ENCODE measurements at regions of chr15 and their contacts with region 1.

Region 1: DNA sequence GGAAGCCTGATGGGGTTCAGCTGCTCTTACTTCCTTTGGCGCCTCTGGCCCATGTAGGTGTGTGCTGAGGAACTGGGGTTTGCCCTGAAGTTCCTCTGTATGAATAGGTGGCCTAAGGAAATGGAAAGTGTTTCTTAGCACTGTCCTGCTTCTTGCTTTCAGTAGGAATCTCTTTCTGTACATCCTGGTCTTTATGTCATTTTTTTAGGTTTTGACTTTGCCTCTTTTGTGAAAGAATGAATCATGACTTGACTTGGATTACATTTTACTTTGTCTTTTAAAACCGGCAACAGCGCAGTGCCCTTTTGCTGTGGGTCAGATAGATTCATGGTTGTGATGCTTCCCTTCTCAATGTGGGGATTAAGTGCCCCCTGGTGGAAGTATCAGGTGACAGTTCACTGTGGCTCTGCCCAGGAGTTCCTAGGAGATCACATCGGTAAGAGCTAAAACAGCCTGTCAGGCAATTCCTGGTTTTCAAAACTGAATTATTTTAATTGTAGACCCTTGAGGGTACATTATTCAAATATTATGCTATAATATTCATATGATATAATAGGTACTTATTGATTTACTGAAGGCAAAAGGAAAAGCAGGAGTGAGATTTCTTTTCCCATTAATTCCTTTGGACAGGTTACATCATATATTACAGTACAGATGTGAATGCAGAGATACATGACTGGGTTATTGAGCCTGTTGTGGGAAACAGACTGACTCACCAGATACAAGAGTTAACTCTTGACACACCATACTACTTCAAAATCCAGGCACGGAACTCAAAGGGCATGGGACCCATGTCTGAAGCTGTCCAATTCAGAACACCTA is 95.4 kb downstream of the HCN4 start:
- DNase-seq: peak; percentile 27 to 44 (median 42)
- H3K4me3 ChIP-seq: no peak overlapping the region
- H3K4me3 Mint-ChIP-seq: peak overlapping the region in 1 of 2 donors; percentile 70
- H3K27ac ChIP-seq: no peak overlapping the region
- H3K27ac Mint-ChIP-seq: no peak overlapping the region
- H3K4me1 ChIP-seq: no peaks in the 10 kb centered on the region
- H3K4me1 Mint-ChIP-seq: peaks cover 2% of the 10 kb centered on the region
- H3K27me3 ChIP-seq: peaks cover 3 to 7% of the 10 kb centered on the region in 2 donors
- H3K27me3 Mint-ChIP-seq: peaks cover 14 to 18% (median 15%) of the 10 kb centered on the region in 3 donors
- CTCF ChIP-seq: peak; percentile 84

Region 2: DNA sequence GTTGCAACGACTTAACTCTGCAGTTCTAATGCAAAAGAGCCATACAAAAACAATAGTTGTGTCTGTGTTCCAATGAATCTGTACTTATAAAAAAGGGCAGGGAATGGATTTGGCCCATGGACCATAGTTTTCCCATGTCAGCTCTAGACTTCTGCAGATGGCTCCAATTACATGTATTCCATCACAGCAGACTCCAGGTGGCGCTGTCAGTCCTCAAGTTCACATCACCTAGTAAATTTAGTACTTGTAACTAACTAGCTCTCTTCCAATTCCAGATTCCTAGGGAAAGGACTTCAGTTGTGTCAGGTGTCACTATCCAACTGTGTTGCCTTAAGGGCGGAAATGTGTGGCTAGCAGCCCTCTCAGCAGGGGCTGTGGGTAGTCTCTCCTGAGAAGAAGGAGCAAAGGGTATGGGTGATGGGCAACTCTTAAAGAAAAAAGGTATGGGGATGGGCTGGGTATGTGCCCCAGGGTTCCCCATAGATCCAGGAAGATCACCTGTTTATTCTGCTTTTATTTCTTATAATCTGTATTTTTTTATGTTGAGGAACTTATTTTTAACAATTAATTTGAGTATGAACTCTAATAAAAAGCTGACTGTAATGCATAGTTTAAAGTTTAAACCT is 551.2 kb before region 1 on chr15:
- intact Hi-C with region 1: loop called in 1 of 2 experiments (anchors 5 kb)
- DNase-seq: peak; percentile 47 to 62 (median 56)
- H3K4me3 ChIP-seq: no peak overlapping the region
- H3K4me3 Mint-ChIP-seq: no peak overlapping the region
- H3K27ac ChIP-seq: no peak overlapping the region
- H3K27ac Mint-ChIP-seq: no peak overlapping the region
- H3K4me1 ChIP-seq: no peaks in the 10 kb centered on the region
- H3K4me1 Mint-ChIP-seq: no peaks in the 10 kb centered on the region
- H3K27me3 ChIP-seq: no peaks in the 10 kb centered on the region
- H3K27me3 Mint-ChIP-seq: peaks cover 0 to 4% (median 2%) of the 10 kb centered on the region in 3 donors
- CTCF ChIP-seq: peak; percentile 92

Region 3: GRCh38 chr15:73212424-73212823 is 61.0 kb before region 1 on chr15:
- intact Hi-C with region 1: no loop called
- DNase-seq: no peak
- H3K4me3 ChIP-seq: no peak overlapping the region
- H3K4me3 Mint-ChIP-seq: no peak overlapping the region
- H3K27ac ChIP-seq: no peak overlapping the region
- H3K27ac Mint-ChIP-seq: no peak overlapping the region
- H3K4me1 ChIP-seq: no peaks in the 10 kb centered on the region
- H3K4me1 Mint-ChIP-seq: no peaks in the 10 kb centered on the region
- H3K27me3 ChIP-seq: peaks cover 0 to 10% of the 10 kb centered on the region in 2 donors
- H3K27me3 Mint-ChIP-seq: peaks cover 2 to 23% (median 5%) of the 10 kb centered on the region in 3 donors
- CTCF ChIP-seq: no peak

Region 4: GRCh38 chr15:73240866-73241499 is 32.4 kb before region 1 on chr15:
- intact Hi-C with region 1: no loop called
- DNase-seq: peak; percentile 39 to 58 (median 56)
- H3K4me3 ChIP-seq: no peak overlapping the region
- H3K4me3 Mint-ChIP-seq: no peak overlapping the region
- H3K27ac ChIP-seq: no peak overlapping the region
- H3K27ac Mint-ChIP-seq: no peak overlapping the region
- H3K4me1 ChIP-seq: no peaks in the 10 kb centered on the region
- H3K4me1 Mint-ChIP-seq: no peaks in the 10 kb centered on the region
- H3K27me3 ChIP-seq: peaks cover 7% of the 10 kb centered on the region in 2 donors
- H3K27me3 Mint-ChIP-seq: peaks cover 7 to 15% (median 8%) of the 10 kb centered on the region in 3 donors
- CTCF ChIP-seq: peak; percentile 89

Region 5: DNA sequence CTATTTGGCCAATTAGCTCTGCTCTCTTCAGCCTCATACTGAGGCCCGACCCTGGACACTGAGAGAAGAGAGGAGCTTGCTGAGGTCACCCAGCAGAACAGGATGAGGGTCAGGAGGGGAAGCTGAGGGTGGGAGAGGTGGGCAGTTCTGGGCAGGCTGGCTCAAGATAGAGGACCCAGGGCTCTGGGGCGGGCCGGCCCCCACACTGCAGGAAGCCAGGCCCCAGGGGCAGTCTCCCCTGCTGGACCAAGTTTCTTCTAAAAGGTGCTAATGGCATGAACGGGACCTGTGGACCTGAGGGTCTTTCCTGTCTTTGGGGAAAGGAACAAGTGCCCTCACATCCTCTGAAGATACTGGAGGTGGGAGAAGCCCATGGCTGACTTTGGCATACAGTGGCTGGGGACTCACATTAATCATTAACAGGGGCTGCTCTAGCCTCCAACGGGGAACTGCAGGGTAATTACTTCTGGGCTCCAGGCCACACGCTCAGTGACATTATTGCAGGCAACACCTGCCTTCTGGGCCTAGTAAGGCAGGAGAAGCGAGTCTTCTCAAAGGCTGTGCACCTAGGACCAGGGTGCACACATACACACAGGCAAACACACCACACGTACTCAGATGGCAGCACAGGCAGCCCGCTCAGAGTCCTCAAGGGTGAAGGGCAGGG is 84.7 kb after region 1 on chr15:
- intact Hi-C with region 1: no loop called
- DNase-seq: no peak
- H3K4me3 ChIP-seq: no peak overlapping the region
- H3K4me3 Mint-ChIP-seq: no peak overlapping the region
- H3K27ac ChIP-seq: no peak overlapping the region
- H3K27ac Mint-ChIP-seq: no peak overlapping the region
- H3K4me1 ChIP-seq: no peaks in the 10 kb centered on the region
- H3K4me1 Mint-ChIP-seq: no peaks in the 10 kb centered on the region
- H3K27me3 ChIP-seq: peaks cover 0 to 18% of the 10 kb centered on the region in 2 donors
- H3K27me3 Mint-ChIP-seq: peaks cover 34 to 48% (median 34%) of the 10 kb centered on the region in 3 donors
- CTCF ChIP-seq: no peak